Right lobe of liver (tissue), 6 donors: ENCODE measurements at regions of chrX and their contacts with region 1.

Region 1: DNA sequence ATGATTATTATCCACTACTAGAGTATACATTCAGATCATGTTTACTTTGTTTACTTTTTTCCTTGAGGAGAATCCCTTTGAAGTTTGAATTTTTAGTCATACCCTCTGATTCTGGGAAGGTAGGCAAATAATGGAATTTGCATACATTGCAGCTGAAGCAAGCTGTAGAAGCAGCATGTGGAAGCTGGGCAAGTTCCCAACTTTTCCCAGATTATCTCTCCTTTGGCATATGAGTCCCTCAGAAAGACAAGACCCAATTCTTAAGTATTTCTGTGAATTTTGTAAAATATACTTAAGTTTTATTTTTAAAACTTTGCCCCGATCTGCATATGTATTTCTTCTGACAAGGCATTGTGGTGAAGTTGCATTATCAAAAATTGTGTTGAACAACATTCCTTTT is 94.9 kb downstream of the CNKSR2 start:
- DNase-seq: no peak
- ATAC-seq: no peak
- H3K4me3 ChIP-seq: no peak overlapping the region
- H3K27ac ChIP-seq: no peak overlapping the region
- H3K4me1 ChIP-seq: no peaks in the 10 kb centered on the region
- H3K27me3 ChIP-seq: no peaks in the 10 kb centered on the region
- CTCF ChIP-seq: no peak
- POLR2A ChIP-seq: no peak

Region 2: DNA sequence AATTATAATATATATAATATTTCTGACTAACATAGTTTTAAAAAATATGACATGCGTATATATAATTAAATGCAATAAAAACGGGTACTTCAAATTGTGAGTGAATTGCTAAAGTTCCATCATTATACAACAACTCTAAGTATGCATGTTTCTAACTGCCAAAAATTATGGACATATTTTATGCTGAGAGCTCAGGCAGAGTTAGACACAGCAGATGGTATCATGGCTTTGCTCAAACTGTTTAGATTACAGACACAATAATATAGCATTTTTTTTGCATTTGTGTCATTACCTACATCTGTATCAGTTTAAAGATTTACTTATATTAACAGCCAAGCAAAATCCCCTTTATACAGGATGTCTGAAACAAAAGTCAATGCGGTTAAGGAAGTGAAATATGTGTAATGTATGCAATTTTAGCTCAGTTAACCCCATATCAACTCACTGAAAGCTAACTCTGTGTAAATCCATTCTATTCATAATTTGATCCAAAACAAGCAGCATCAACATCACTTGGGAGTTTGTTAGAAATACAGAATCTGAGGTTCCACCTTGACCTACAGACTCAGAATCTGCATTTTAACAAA is 213.9 kb before region 1 on chrX:
- intact Hi-C with region 1: no loop called
- DNase-seq: no peak
- ATAC-seq: no peak
- H3K4me3 ChIP-seq: no peak overlapping the region
- H3K27ac ChIP-seq: no peak overlapping the region
- H3K4me1 ChIP-seq: no peaks in the 10 kb centered on the region
- H3K27me3 ChIP-seq: no peaks in the 10 kb centered on the region
- CTCF ChIP-seq: no peak
- POLR2A ChIP-seq: no peak

Region 3: GRCh38 chrX:21319323-21319722 is 149.7 kb before region 1 on chrX:
- intact Hi-C with region 1: loop called in 1 of 2 experiments (anchors 10 kb)
- DNase-seq: no peak
- ATAC-seq: no peak
- H3K4me3 ChIP-seq: no peak overlapping the region
- H3K27ac ChIP-seq: no peak overlapping the region
- H3K4me1 ChIP-seq: no peaks in the 10 kb centered on the region
- H3K27me3 ChIP-seq: no peaks in the 10 kb centered on the region
- CTCF ChIP-seq: no peak
- POLR2A ChIP-seq: no peak

Region 4: DNA sequence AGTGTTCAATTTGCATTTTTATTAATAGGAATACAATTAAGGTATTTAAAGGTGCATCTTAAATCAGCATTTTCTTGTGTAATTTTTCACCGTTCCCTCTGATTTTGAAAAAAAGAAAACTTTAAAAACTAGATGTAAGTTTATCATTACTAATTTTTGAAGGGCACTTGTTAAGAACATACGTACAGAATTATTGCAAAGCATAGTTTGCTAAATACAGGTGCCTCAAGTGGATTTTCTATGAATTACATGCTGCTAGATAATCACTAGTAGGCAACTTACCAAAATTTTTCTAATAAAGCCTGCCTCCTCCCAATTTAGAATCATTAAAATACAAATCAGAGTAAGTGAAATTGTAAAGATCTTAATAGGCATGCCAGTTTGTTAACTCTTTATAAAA is 86.4 kb before region 1 on chrX:
- intact Hi-C with region 1: no loop called
- DNase-seq: no peak
- ATAC-seq: peak in 3 of 4 donors; percentile 52 to 68 (median 66)
- H3K4me3 ChIP-seq: no peak overlapping the region
- H3K27ac ChIP-seq: no peak overlapping the region
- H3K4me1 ChIP-seq: peaks cover 0 to 25% (median 4%) of the 10 kb centered on the region in 4 donors
- H3K27me3 ChIP-seq: no peaks in the 10 kb centered on the region
- CTCF ChIP-seq: peak; percentile 41 to 53 (median 43)
- POLR2A ChIP-seq: no peak

Region 5: GRCh38 chrX:22345884-22346283 is 876.8 kb after region 1 on chrX:
- intact Hi-C with region 1: no loop called
- DNase-seq: no peak
- ATAC-seq: no peak
- H3K4me3 ChIP-seq: no peak overlapping the region
- H3K27ac ChIP-seq: no peak overlapping the region
- H3K4me1 ChIP-seq: no peaks in the 10 kb centered on the region
- H3K27me3 ChIP-seq: no peaks in the 10 kb centered on the region
- CTCF ChIP-seq: no peak
- POLR2A ChIP-seq: no peak